Right ventricle myocardium inferior (tissue), 1 donor: ENCODE measurements at regions of chr13 and their contacts with region 1.

Region 1: GRCh38 chr13:48233046-48233907 is at the start of gene ITM2B:
- DNase-seq: peak; percentile 91
- ATAC-seq: peak; percentile 92
- total RNA-seq, gene ITM2B: 537 TPM

Region 2: DNA sequence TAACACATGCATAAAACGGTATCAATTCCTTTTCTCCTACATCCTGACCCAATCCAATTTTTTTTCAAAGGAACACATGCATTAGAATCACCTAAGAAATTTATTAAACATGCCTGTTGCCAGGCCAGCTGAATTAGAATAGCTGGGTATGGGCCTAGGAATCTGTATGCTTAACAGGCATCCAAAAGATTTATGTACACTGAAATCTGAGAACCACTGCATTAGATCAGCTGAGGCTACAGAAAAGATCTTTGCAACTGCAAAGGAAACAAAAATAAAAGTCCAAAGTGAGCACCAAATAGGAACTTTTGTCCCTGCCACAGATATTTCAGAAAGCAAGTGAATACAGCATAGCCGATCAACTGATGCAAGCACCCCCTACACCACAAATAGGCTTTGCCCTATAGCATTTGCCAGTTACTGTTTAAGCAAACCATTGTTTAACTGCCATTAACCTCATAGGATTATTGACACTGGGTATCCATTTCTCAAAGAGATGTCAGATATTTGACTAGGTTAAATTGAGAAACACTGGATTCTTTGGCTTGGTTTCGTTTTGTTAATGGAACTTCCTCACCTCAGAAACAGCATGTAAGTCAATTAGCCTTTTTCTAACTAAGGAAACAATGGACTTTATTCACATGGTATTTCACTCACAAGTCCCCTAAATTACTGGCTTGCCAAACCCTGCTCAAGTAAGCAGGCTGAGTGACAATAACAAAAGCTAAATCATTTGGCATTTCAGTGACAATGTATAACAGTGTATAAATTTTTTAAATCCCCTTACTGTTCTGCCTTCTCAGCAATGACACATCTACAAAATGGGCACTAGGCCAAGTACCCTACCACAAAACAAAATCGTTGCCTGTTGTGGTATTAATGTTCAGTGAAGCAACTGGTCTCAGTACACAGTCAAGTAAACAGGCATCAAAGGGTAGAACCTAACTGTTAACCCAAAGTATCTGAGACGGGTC is 300.0 kb before region 1 on chr13:
- intact Hi-C with region 1: no loop called
- DNase-seq: no peak
- ATAC-seq: no peak

Region 3: GRCh38 chr13:48037346-48038173 is 195.7 kb before region 1 on chr13 and contains the start of gene NUDT15:
- intact Hi-C with region 1: loop called (anchors 5 kb)
- DNase-seq: peak; percentile 98
- ATAC-seq: peak; percentile 99
- total RNA-seq, gene NUDT15: 12.1 TPM

Region 4: GRCh38 chr13:48094781-48095502 is 138.3 kb before region 1 on chr13 and contains the start of gene MED4:
- intact Hi-C with region 1: loop called (anchors 5 kb)
- DNase-seq: peak; percentile 98
- ATAC-seq: peak; percentile 97
- total RNA-seq, gene MED4: 42.2 TPM

Region 5: DNA sequence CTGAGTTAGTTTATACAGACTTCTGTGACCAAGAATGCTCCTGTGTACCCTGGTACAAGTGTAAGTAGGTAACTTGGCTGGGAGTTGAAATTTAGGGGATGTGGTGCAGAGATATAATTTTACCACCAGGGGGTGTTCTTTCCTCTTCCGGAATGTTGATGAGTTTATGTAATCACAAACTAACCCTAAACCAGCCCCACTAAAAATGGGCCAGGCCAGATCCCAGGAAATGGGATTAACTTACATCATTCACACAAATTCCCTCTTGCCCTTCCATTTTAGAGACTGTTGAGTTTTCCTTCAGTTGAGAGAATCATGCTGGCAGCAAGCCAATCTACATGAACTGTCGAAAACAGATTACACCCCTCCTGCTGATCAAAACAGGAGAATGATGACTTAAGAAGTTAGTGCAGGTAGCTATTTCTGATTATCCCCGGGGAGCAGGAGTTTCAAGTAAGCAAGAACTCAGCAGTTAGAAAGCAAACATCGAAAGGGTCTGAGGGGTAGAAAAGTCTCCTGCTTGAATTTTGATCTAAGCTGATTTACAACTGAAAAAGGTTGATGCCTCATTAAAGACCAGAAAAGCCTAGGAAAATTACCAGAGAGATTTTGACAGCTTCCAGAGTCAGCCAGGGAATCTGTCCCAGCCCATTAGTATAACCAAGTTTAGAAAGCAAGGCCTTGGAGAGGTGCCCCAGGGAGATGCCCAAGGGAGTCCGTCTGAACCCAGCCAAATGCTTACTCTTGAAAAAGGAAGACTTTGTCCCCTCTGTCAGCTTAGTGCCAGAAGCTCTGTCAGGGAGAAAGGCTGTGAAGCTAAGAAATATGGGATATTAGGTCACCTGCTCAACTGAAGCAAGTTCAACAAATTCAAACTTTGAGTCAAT is 106.1 kb before region 1 on chr13:
- intact Hi-C with region 1: loop called (anchors 2 kb)
- DNase-seq: peak; percentile 75
- ATAC-seq: peak; percentile 91

Region 6: DNA sequence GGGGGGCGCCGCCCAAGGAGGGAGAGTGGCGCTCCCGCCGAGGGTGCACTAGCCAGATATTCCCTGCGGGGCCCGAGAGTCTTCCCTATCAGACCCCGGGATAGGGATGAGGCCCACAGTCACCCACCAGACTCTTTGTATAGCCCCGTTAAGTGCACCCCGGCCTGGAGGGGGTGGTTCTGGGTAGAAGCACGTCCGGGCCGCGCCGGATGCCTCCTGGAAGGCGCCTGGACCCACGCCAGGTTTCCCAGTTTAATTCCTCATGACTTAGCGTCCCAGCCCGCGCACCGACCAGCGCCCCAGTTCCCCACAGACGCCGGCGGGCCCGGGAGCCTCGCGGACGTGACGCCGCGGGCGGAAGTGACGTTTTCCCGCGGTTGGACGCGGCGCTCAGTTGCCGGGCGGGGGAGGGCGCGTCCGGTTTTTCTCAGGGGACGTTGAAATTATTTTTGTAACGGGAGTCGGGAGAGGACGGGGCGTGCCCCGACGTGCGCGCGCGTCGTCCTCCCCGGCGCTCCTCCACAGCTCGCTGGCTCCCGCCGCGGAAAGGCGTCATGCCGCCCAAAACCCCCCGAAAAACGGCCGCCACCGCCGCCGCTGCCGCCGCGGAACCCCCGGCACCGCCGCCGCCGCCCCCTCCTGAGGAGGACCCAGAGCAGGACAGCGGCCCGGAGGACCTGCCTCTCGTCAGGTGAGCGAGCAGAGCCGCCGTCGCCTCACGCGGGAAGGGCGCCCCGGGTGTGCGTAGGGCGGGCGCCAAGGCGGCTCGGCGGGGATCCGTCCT is 70.3 kb after region 1 on chr13 and contains the start of gene RB1:
- intact Hi-C with region 1: loop called (anchors 1 kb)
- DNase-seq: peak; percentile 97
- ATAC-seq: peak; percentile 95
- total RNA-seq, gene RB1: 27.7 TPM

Region 7: GRCh38 chr13:48580185-48580803 is 347.0 kb after region 1 on chr13:
- intact Hi-C with region 1: loop called (anchors 10 kb)
- DNase-seq: no peak
- ATAC-seq: peak; percentile 38